CD4-positive, alpha-beta memory T cell (primary cell): ENCODE measurements at regions of chr17 and their contacts with region 1.

Region 1: GRCh38 chr17:58517734-58518609 is 3.5 kb upstream of the MTMR4 start:
- DNase-seq: peak; percentile 100
- H3K4me3 ChIP-seq: peak overlapping the region; percentile 82 to 98
- H3K4me3 Mint-ChIP-seq: peak overlapping the region; percentile 88 to 100 (median 96)
- H3K27ac ChIP-seq: peak overlapping the region; percentile 65
- H3K27ac Mint-ChIP-seq: peak overlapping the region; percentile 90 to 99 (median 97)
- H3K4me1 ChIP-seq: peaks cover 47% of the 10 kb centered on the region
- H3K4me1 Mint-ChIP-seq: peaks cover 27 to 55% (median 37%) of the 10 kb centered on the region in 4 donors
- H3K27me3 ChIP-seq: no peaks in the 10 kb centered on the region
- H3K27me3 Mint-ChIP-seq: peaks cover 0 to 2% of the 10 kb centered on the region in 2 donors

Region 2: DNA sequence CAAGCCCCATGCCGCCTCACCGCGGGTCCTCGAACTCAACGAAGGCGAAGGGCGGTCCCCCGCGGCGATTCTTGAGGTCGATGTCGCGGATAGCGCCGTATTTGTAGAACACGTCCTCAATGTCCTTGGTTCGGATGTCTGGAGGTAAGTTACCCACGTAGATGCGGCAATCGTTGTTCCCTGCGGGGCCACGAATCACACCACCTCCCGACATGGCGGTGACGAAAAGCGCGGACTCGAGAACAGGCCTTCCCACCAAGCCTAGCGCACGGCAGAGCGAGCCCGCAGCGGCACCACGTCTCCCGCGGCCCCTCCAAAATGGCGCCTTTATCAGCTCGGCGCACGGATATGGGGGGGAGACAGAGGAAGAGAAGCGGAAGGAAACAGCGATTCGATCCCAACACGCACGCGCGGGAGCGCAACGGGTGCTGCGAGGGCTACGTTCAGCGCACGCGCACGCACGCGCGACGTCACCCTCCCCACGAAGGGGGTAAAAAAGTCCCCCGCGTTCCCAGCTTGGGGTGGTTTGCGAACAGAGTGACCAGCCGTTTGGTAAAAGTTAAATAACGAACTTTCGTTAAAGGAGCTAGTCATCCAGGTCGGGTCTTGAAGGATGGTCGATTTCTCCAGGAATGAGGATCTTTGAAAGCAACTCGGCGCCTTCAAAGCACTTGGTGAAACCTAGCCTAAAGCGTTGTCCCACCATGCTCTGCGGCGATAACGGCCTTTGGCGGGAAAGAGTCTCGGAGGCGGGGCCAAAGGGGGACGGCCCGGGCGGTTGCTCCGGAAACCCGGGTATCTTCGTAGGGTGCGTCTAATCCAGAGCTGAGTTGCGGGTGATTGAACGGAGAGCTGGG is 510.8 kb before region 1 on chr17 and contains the start of gene SRSF1:
- CTCF ChIA-PET with region 1: no interaction called
- POLR2A ChIA-PET with region 1: no interaction called
- intact Hi-C with region 1: loop called (anchors 1 kb)
- DNase-seq: peak; percentile 98 to 99 (median 99)
- H3K4me3 ChIP-seq: peak within 1 kb of the TSS; percentile 96 to 98
- H3K4me3 Mint-ChIP-seq: peak within 1 kb of the TSS; percentile 96 to 100 (median 100)
- H3K27ac ChIP-seq: peak within 1 kb of the TSS; percentile 97
- H3K27ac Mint-ChIP-seq: peak within 1 kb of the TSS; percentile 98 to 100 (median 99)
- H3K4me1 ChIP-seq: peaks cover 46% of the 10 kb centered on the region
- H3K4me1 Mint-ChIP-seq: peaks cover 30 to 61% (median 44%) of the 10 kb centered on the region in 4 donors
- H3K27me3 ChIP-seq: no peaks in the 10 kb centered on the region
- H3K27me3 Mint-ChIP-seq: no peaks in the 10 kb centered on the region
- total RNA-seq, gene SRSF1: 242 to 257 TPM

Region 3: GRCh38 chr17:58344047-58344790 is 173.8 kb before region 1 on chr17:
- CTCF ChIA-PET with region 1: interaction called, 9 read pairs
- POLR2A ChIA-PET with region 1: interaction called, 16 read pairs
- intact Hi-C with region 1: loop called (anchors 2 kb)
- DNase-seq: peak; percentile 86 to 99 (median 90)
- H3K4me3 ChIP-seq: peak overlapping the region; percentile 59 to 99
- H3K4me3 Mint-ChIP-seq: peak overlapping the region; percentile 86 to 99 (median 90)
- H3K27ac ChIP-seq: peak overlapping the region; percentile 97
- H3K27ac Mint-ChIP-seq: peak overlapping the region; percentile 92 to 99 (median 94)
- H3K4me1 ChIP-seq: peaks cover 97% of the 10 kb centered on the region
- H3K4me1 Mint-ChIP-seq: peaks cover 55 to 98% (median 75%) of the 10 kb centered on the region in 4 donors
- H3K27me3 ChIP-seq: no peaks in the 10 kb centered on the region
- H3K27me3 Mint-ChIP-seq: no peaks in the 10 kb centered on the region

Region 4: DNA sequence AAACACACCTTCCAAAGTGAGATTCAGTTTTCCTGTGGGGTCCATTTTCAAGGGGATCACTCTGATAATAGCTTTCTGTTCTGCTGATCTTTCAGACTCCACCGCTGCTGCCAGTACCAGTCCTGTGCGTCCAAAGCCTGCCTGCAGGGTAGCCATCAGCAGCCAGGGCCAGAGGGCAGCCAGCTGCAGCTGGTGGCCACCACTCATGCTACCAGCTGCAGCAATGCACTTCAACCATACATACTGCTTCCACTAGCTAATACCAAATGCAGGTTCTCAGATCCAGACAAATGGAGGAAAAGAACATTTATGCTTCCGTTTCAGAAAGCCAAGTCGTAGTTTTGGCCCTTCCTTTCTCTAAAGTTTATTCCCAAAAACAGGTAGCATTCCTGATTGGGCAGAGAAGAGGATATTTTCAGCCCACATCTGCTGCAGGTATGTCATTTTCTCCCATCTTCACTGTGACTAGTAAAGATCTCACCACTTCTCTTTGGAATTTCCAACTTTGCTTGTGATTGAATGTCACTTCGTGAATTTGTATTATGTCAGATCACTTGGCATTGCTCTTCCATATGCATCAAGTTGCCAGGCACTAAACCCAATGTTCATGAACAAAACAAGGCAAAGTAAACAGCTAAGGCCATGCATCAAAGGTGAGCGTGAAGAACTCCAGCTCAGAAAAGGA is 102.5 kb before region 1 on chr17:
- CTCF ChIA-PET with region 1: no interaction called
- POLR2A ChIA-PET with region 1: no interaction called
- intact Hi-C with region 1: no loop called
- DNase-seq: no peak
- H3K4me3 ChIP-seq: no peak overlapping the region
- H3K4me3 Mint-ChIP-seq: no peak overlapping the region
- H3K27ac ChIP-seq: no peak overlapping the region
- H3K27ac Mint-ChIP-seq: peak overlapping the region in 1 of 7 donors; percentile 44
- H3K4me1 ChIP-seq: peaks cover 15% of the 10 kb centered on the region
- H3K4me1 Mint-ChIP-seq: peaks cover 7 to 15% (median 9%) of the 10 kb centered on the region in 4 donors
- H3K27me3 ChIP-seq: no peaks in the 10 kb centered on the region
- H3K27me3 Mint-ChIP-seq: no peaks in the 10 kb centered on the region

Region 5: GRCh38 chr17:58577642-58578091 is 59.7 kb after region 1 on chr17:
- CTCF ChIA-PET with region 1: interaction called, 16 read pairs
- POLR2A ChIA-PET with region 1: interaction called, 6 read pairs
- intact Hi-C with region 1: loop called (anchors 2 kb)
- DNase-seq: peak; percentile 25 to 56 (median 36)
- H3K4me3 ChIP-seq: no peak overlapping the region
- H3K4me3 Mint-ChIP-seq: no peak overlapping the region
- H3K27ac ChIP-seq: no peak overlapping the region
- H3K27ac Mint-ChIP-seq: peak overlapping the region in 1 of 7 donors; percentile 19
- H3K4me1 ChIP-seq: no peaks in the 10 kb centered on the region
- H3K4me1 Mint-ChIP-seq: peaks cover 0 to 2% (median under 1%) of the 10 kb centered on the region in 4 donors
- H3K27me3 ChIP-seq: no peaks in the 10 kb centered on the region
- H3K27me3 Mint-ChIP-seq: no peaks in the 10 kb centered on the region

Region 6: GRCh38 chr17:58692239-58693055 is 174.5 kb after region 1 on chr17 and contains the start of gene RAD51C:
- CTCF ChIA-PET with region 1: interaction called, 3 read pairs
- POLR2A ChIA-PET with region 1: interaction called, 16 read pairs
- intact Hi-C with region 1: loop called (anchors 1 kb)
- DNase-seq: peak; percentile 77 to 85 (median 84)
- H3K4me3 ChIP-seq: peak within 1 kb of the TSS; percentile 77 to 83
- H3K4me3 Mint-ChIP-seq: peak within 1 kb of the TSS; percentile 85 to 97 (median 93)
- H3K27ac ChIP-seq: peak within 1 kb of the TSS; percentile 72
- H3K27ac Mint-ChIP-seq: peak within 1 kb of the TSS; percentile 73 to 98 (median 92)
- H3K4me1 ChIP-seq: peaks cover 29% of the 10 kb centered on the region
- H3K4me1 Mint-ChIP-seq: peaks cover 18 to 27% (median 23%) of the 10 kb centered on the region in 4 donors
- H3K27me3 ChIP-seq: no peaks in the 10 kb centered on the region
- H3K27me3 Mint-ChIP-seq: no peaks in the 10 kb centered on the region
- total RNA-seq, gene RAD51C: 25.8 to 28.2 TPM

Region 7: GRCh38 chr17:59106463-59107305 is 588.7 kb after region 1 on chr17 and contains the start of gene TRIM37:
- CTCF ChIA-PET with region 1: interaction called, 3 read pairs
- POLR2A ChIA-PET with region 1: interaction called, 9 read pairs
- intact Hi-C with region 1: loop called (anchors 1 kb)
- DNase-seq: peak; percentile 99 to 100 (median 99)
- H3K4me3 ChIP-seq: peak within 1 kb of the TSS; percentile 67 to 71
- H3K4me3 Mint-ChIP-seq: peak within 1 kb of the TSS; percentile 90 to 96 (median 92)
- H3K27ac ChIP-seq: peak within 1 kb of the TSS; percentile 81
- H3K27ac Mint-ChIP-seq: peak within 1 kb of the TSS; percentile 90 to 97 (median 95)
- H3K4me1 ChIP-seq: peaks cover 29% of the 10 kb centered on the region
- H3K4me1 Mint-ChIP-seq: peaks cover 25 to 47% (median 37%) of the 10 kb centered on the region in 4 donors
- H3K27me3 ChIP-seq: no peaks in the 10 kb centered on the region
- H3K27me3 Mint-ChIP-seq: no peaks in the 10 kb centered on the region
- total RNA-seq, gene TRIM37: 20.7 to 25.0 TPM

Region 8: DNA sequence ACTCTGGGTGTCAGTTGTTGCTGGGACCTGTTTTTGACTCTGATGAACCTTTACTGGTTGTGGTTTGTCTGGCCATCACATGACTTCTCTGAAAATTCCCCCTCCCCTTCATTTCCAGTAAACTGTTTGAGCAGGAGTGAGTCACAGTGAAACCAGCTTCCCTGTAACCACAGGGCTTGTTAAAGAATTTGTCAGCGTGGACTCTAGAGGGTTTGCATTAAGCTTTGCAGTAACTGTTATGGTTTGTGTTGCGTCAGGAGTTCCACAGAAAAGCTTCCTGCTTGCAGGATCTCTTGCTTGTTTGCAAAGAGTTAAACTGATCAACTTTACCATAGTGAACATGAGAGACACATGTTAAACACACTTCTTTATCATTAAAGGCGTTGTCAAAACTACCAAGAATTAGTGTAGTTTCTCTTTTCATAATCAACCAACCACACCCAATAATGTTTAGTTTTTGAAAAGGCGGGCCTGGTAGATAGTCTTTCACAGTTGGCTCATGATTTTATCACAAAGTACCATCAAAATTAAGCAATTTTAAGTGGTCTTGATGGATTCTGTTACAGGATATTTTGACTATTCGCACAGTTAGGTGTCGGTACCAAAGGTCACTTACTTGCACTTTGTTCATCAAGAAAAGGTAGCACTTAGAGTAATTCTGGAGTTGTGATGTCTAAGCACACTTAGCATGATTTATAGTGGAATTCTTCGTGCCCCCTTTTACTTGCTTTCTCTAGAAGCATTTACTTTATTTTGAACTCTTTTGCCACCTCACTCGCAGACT is 1268.8 kb after region 1 on chr17:
- CTCF ChIA-PET with region 1: no interaction called
- POLR2A ChIA-PET with region 1: no interaction called
- intact Hi-C with region 1: loop called (anchors 5 kb)
- DNase-seq: peak; percentile 86 to 96 (median 91)
- H3K4me3 ChIP-seq: peak overlapping the region; percentile 18 to 51
- H3K4me3 Mint-ChIP-seq: peak overlapping the region; percentile 72 to 89 (median 87)
- H3K27ac ChIP-seq: peak overlapping the region; percentile 87
- H3K27ac Mint-ChIP-seq: peak overlapping the region; percentile 94 to 100 (median 99)
- H3K4me1 ChIP-seq: peaks cover 78% of the 10 kb centered on the region
- H3K4me1 Mint-ChIP-seq: peaks cover 38 to 64% (median 50%) of the 10 kb centered on the region in 4 donors
- H3K27me3 ChIP-seq: no peaks in the 10 kb centered on the region
- H3K27me3 Mint-ChIP-seq: no peaks in the 10 kb centered on the region